Activated B cell treated with CpG ODN at 0.5 μM for 24 hours (primary cell): ENCODE measurements at regions of chr22 and their contacts with region 1.

Region 1: GRCh38 chr22:36194971-36195370 is 6.6 kb downstream of the APOL4 start:
- DNase-seq: no peak
- ATAC-seq: peak; percentile 70
- H3K4me3 Mint-ChIP-seq: no peak overlapping the region
- H3K27ac Mint-ChIP-seq: no peak overlapping the region
- H3K4me1 Mint-ChIP-seq: peaks cover 19% of the 10 kb centered on the region
- H3K27me3 Mint-ChIP-seq: peaks cover 9% of the 10 kb centered on the region
- CTCF ChIP-seq: no peak

Region 2: DNA sequence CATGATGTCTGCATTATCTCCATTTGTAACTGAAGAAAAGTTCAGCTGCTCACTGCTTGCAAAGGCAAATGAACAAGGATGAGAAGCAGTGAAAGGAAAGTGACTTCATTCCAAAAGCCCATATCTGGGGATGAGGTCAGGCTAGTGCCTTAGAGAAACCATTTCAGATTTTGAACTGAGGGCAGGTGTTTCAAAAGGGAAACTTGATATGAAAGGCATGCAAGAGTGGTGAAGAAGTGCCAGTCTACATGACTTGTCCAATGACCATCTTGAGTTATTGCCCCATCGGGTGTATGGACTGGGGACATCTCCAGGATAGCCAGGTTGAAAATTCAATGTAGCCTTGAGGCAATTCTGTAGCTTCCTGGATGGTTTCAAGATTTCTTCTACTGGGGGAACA is 14.0 kb after region 1 on chr22:
- CTCF ChIA-PET with region 1: no interaction called
- POLR2A ChIA-PET with region 1: no interaction called
- intact Hi-C with region 1: loop called (anchors 1 kb)
- DNase-seq: no peak
- ATAC-seq: no peak
- H3K4me3 Mint-ChIP-seq: no peak overlapping the region
- H3K27ac Mint-ChIP-seq: no peak overlapping the region
- H3K4me1 Mint-ChIP-seq: peaks cover 41% of the 10 kb centered on the region
- H3K27me3 Mint-ChIP-seq: no peaks in the 10 kb centered on the region
- CTCF ChIP-seq: no peak

Region 3: GRCh38 chr22:36221799-36222751 is 27.1 kb after region 1 on chr22:
- CTCF ChIA-PET with region 1: interaction called, 6 read pairs
- POLR2A ChIA-PET with region 1: no interaction called
- intact Hi-C with region 1: loop called (anchors 2 kb)
- DNase-seq: no peak
- ATAC-seq: peak; percentile 57
- H3K4me3 Mint-ChIP-seq: peak overlapping the region; percentile 53
- H3K27ac Mint-ChIP-seq: no peak overlapping the region
- H3K4me1 Mint-ChIP-seq: peaks cover 3% of the 10 kb centered on the region
- H3K27me3 Mint-ChIP-seq: peaks cover 5% of the 10 kb centered on the region
- CTCF ChIP-seq: no peak

Region 4: DNA sequence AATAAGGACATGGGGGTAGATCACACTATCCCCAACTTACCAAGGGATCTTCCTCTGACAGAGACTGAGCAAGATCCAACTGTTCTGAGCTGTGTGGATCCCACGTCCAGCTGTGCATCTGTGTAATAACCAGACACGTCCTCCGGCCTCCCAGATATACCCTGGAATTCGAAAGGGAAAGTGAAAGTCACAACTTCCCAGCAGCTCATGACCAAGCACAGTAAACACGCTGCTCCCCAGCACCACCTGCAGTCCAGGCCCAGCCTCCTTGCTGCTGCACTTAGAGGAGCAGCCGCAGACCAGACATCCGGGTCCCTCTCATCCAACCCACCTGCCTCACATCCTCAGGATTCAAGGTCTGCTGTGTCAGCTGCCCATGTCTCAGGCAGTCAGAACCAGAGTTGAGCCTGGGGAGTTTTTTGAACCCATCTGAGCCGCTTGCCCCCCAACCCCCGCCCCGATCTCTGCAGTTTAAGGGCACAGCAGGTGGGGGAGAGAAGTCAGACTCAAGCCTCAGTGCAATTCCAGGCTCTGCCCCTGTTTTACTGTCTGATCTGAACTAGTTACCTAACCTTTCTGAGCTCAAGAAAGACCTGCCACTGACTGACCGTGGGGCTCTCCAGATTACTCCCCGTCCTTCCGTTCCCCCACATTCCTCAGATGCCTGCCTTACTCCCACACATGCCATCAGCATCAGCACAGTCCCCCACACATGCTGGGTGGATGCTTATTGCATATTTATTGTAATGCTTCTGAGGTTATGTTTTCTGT is 44.6 kb after region 1 on chr22 and contains the start of gene APOL2:
- CTCF ChIA-PET with region 1: interaction called, 3 read pairs
- POLR2A ChIA-PET with region 1: no interaction called
- intact Hi-C with region 1: loop called (anchors 5 kb)
- DNase-seq: peak; percentile 56
- ATAC-seq: peak; percentile 98
- H3K4me3 Mint-ChIP-seq: peak within 1 kb of the TSS; percentile 98
- H3K27ac Mint-ChIP-seq: peak within 1 kb of the TSS; percentile 94
- H3K4me1 Mint-ChIP-seq: peaks cover 46% of the 10 kb centered on the region
- H3K27me3 Mint-ChIP-seq: no peaks in the 10 kb centered on the region
- CTCF ChIP-seq: no peak
- total RNA-seq, gene APOL2: 35.7 and 38.3 TPM in 2 replicates

Region 5: DNA sequence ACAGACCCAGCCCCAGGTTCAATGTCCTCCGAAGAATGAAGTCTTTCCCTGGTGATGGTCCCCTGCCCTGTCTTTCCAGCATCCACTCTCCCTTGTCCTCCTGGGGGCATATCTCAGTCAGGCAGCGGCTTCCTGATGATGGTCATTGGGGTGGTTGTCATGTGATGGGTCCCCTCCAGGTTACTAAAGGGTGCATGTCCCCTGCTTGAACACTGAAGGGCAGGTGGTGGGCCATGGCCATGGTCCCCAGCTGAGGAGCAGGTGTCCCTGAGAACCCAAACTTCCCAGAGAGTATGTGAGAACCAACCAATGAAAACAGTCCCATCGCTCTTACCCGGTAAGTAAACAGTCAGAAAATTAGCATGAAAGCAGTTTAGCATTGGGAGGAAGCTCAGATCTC is 72.1 kb after region 1 on chr22:
- CTCF ChIA-PET with region 1: no interaction called
- POLR2A ChIA-PET with region 1: no interaction called
- intact Hi-C with region 1: no loop called
- DNase-seq: no peak
- ATAC-seq: no peak
- H3K4me3 Mint-ChIP-seq: no peak overlapping the region
- H3K27ac Mint-ChIP-seq: no peak overlapping the region
- H3K4me1 Mint-ChIP-seq: no peaks in the 10 kb centered on the region
- H3K27me3 Mint-ChIP-seq: no peaks in the 10 kb centered on the region
- CTCF ChIP-seq: no peak

Region 6: GRCh38 chr22:36277482-36278291 is 82.7 kb after region 1 on chr22:
- CTCF ChIA-PET with region 1: interaction called, 3 read pairs
- POLR2A ChIA-PET with region 1: no interaction called
- intact Hi-C with region 1: loop called (anchors 1 kb)
- DNase-seq: peak; percentile 43
- ATAC-seq: peak; percentile 86
- H3K4me3 Mint-ChIP-seq: no peak overlapping the region
- H3K27ac Mint-ChIP-seq: peak overlapping the region; percentile 46
- H3K4me1 Mint-ChIP-seq: peaks cover 17% of the 10 kb centered on the region
- H3K27me3 Mint-ChIP-seq: no peaks in the 10 kb centered on the region
- CTCF ChIP-seq: no peak

Region 7: DNA sequence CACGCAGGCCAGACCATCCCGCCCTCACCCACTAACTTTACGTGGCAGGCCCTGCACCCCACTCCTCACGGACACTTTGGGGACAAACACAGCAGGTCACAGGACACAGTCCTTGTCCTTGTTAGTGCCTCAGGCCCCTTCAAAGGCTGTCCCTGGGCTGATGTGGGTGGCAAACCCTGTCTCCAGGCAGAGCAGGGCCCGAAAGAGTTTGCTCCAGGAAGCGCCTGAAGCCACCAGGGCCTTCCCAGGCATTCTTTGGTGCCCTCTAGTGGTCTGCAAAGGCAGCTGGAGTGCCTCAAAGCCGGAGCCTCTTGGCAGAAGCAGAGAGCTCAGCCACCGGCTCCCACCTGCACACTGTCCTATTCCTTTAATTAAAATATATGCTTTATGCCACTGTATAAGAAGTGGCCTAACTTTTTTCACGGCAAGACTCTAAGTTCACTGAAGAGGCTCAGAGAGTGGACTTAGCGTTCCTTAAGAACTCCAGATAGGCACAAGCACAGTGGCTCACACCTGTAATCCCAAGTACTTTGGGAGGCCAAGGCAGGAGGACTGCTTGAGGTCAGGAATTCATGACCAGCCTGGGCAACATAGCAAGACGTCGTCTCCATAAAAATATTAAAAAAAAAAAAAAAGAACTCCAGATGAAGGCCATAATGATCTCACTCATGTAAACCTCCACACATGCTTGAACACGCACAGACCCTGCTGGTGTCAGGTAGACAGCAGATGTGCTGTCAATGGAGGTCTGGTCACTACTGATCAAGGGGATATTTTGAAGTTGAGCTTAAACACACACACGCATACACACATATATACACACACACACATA is 275.4 kb after region 1 on chr22:
- CTCF ChIA-PET with region 1: no interaction called
- POLR2A ChIA-PET with region 1: no interaction called
- intact Hi-C with region 1: loop called (anchors 5 kb)
- DNase-seq: peak; percentile 62
- ATAC-seq: peak; percentile 96
- H3K4me3 Mint-ChIP-seq: no peak overlapping the region
- H3K27ac Mint-ChIP-seq: no peak overlapping the region
- H3K4me1 Mint-ChIP-seq: peaks cover 6% of the 10 kb centered on the region
- H3K27me3 Mint-ChIP-seq: no peaks in the 10 kb centered on the region
- CTCF ChIP-seq: no peak

Region 8: DNA sequence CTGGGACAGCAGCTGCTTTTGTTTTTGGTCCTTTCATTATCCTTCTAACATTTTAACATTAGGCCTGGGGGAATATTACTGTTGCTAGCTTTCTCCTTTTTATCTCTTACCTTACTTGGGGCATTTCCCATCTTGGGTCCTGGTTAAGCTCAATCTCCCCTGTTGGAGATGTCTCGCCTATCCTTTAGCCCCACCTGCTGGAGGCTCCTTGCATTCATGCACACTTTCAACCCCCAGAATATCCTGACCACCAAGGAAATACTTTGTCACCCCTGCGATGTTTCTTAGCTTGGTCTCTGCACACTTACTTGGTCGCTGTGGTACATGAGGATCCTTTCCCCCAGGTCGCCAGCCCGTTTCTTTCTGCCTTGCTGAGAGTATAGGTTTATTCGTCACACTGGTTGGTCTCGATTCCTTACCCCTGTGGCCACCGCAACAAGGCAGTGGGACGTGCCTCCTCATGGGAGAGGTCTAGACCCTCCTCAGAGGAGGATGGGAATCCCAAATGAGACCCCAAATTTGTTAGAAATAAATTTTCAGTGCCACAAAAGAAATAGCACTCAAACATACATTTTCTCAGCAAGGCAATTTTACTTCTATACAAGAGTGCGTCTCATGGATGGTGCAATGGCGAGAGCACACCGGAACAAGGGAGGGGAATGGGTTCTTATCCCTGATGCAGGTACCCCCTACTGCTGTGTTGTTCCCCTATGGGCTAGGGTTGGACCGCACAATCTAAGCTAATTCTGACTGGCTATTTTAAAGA is 291.8 kb after region 1 on chr22:
- CTCF ChIA-PET with region 1: interaction called, 13 read pairs
- POLR2A ChIA-PET with region 1: interaction called, 8 read pairs
- intact Hi-C with region 1: loop called (anchors 5 kb)
- DNase-seq: no peak
- ATAC-seq: no peak
- H3K4me3 Mint-ChIP-seq: no peak overlapping the region
- H3K27ac Mint-ChIP-seq: no peak overlapping the region
- H3K4me1 Mint-ChIP-seq: peaks cover 12% of the 10 kb centered on the region
- H3K27me3 Mint-ChIP-seq: no peaks in the 10 kb centered on the region
- CTCF ChIP-seq: peak; percentile 19